ENCODE measurements at regions of chr11 and their contacts with region 1.

Region 1: GRCh38 chr11:63023841-63024648 is 8.4 kb upstream of the SLC22A8 start:
- DNase-seq: peak; percentile 89
- H3K4me3 Mint-ChIP-seq: no peak overlapping the region
- H3K27ac Mint-ChIP-seq: no peak overlapping the region
- H3K4me1 Mint-ChIP-seq: peaks cover 4% of the 10 kb centered on the region
- H3K27me3 Mint-ChIP-seq: peaks cover 9% of the 10 kb centered on the region

Region 2: DNA sequence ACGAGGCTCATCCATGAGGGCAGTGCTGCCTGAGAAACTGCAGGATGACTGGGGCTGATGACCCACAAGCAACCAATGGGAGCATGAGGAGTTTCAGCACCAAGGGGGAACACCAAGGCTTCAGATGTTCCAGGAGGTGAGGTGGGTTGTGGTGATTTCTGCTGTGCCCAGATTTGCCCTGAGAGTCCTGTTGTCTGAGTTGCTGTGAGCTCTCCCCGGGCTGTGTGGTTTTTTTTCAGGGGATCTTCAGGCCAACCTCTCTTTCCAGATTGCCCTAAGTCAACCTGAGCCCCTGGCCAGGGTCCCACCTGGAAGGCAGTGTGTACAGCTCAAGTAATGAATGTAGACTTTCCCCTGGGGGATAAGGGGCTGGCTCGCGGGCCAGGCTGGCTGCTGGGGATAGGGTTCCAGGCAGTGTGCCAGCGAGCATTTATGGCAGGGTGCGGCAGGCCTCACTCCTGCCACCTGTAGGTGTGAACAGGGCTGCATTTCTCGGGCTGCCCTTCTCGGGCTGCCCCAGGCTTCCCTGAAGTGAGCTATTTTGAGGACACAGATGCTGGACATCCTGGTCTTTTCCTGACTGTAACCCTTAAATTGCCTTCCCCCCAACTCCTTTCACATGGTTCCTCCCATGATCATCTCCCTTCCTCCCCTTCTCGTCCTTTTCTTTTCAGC is 49.1 kb before region 1 on chr11:
- CTCF ChIA-PET with region 1: interaction called, 11 read pairs
- POLR2A ChIA-PET with region 1: no interaction called
- intact Hi-C with region 1: no loop called
- DNase-seq: peak; percentile 26
- H3K4me3 Mint-ChIP-seq: no peak overlapping the region
- H3K27ac Mint-ChIP-seq: no peak overlapping the region
- H3K4me1 Mint-ChIP-seq: no peaks in the 10 kb centered on the region
- H3K27me3 Mint-ChIP-seq: peaks cover 10% of the 10 kb centered on the region

Region 3: GRCh38 chr11:63007920-63008319 is 16.1 kb before region 1 on chr11:
- CTCF ChIA-PET with region 1: interaction called, 22 read pairs
- POLR2A ChIA-PET with region 1: no interaction called
- intact Hi-C with region 1: no loop called
- DNase-seq: no peak
- H3K4me3 Mint-ChIP-seq: no peak overlapping the region
- H3K27ac Mint-ChIP-seq: no peak overlapping the region
- H3K4me1 Mint-ChIP-seq: no peaks in the 10 kb centered on the region
- H3K27me3 Mint-ChIP-seq: no peaks in the 10 kb centered on the region